Activated CD4-positive, alpha-beta T cell treated with anti-CD3 and anti-CD28 coated beads for 36 hours (primary cell): ENCODE measurements at regions of chr9 and their contacts with region 1.

Region 1: GRCh38 chr9:134449221-134449894 is 123.1 kb downstream of the RXRA start:
- DNase-seq: peak; percentile 90
- ATAC-seq: peak; percentile 100
- H3K4me3 Mint-ChIP-seq: no peak overlapping the region
- H3K27ac Mint-ChIP-seq: no peak overlapping the region
- H3K4me1 Mint-ChIP-seq: peaks cover 5% of the 10 kb centered on the region
- H3K27me3 Mint-ChIP-seq: no peaks in the 10 kb centered on the region

Region 2: GRCh38 chr9:134128727-134129679 is 320.4 kb before region 1 on chr9:
- CTCF ChIA-PET with region 1: no interaction called
- POLR2A ChIA-PET with region 1: no interaction called
- intact Hi-C with region 1: no loop called
- DNase-seq: no peak
- ATAC-seq: no peak
- H3K4me3 Mint-ChIP-seq: no peak overlapping the region
- H3K27ac Mint-ChIP-seq: no peak overlapping the region
- H3K4me1 Mint-ChIP-seq: no peaks in the 10 kb centered on the region
- H3K27me3 Mint-ChIP-seq: no peaks in the 10 kb centered on the region

Region 3: DNA sequence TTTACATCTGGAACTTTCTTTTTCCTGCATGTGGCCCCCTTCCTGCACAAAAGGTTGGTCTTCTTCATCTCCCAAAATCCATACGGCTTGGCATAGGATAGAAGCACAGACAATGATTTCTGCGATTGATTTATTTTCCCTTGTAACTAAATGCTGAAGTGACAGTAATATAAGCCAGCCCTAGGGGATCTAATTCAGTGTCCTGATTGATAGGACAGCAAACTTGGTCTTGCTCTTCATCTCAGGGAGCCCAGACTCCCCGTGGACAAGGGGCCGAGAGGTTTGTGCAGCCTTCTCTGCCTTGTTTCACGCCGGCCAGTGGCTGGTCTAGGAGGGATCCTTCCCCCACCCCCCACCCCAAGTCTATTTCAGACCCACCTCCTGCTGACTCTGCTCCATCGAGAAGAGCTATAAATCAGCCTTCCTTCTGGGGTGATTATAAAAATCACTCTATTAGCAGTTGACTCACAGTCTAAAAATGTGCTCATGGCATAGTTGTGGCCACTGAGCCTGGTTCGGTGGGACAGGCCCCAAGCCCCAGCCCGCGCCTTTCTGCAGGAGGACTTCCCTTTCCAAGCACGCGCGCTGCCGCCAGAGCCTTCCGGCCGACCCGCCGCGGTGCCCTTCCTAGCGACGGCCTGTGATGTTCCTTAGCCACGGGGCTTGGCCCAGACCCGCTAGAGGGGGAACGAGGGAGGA is 102.4 kb after region 1 on chr9:
- CTCF ChIA-PET with region 1: no interaction called
- POLR2A ChIA-PET with region 1: no interaction called
- intact Hi-C with region 1: loop called in 1 of 2 experiments (anchors 5 kb)
- DNase-seq: no peak
- ATAC-seq: no peak
- H3K4me3 Mint-ChIP-seq: no peak overlapping the region
- H3K27ac Mint-ChIP-seq: no peak overlapping the region
- H3K4me1 Mint-ChIP-seq: no peaks in the 10 kb centered on the region
- H3K27me3 Mint-ChIP-seq: peaks cover 10% of the 10 kb centered on the region

Region 4: DNA sequence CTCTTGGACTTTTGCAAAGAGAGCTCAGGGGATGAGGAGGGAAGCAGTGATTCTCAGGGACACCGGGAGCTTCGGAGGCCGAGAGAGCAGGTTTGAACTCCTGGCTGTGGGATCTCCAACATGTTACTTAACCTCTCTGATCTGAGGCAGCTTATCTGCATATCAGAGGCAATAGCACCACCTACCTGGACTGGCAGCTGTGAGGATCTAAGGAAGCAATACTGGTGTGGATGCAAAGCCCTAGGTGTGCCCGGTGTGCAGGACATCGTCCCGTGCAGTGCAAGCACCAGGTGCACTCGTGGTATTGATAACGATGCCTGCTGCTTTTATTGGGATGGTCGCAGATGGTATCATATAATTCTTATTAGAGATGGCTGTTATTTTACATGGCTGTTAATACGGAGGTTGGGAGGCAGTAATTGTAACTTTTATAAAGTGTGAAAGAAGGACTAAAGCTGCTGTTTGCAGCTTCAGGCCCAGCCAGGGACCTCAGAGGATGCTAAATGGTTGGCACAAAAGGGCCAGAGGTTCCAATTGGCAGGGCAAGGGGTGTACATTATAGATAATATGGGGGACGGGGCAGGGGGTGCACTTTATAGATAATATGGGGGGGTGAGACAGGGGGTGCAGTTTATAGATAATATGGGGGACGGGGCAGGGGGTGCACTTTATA is 207.1 kb after region 1 on chr9:
- CTCF ChIA-PET with region 1: no interaction called
- POLR2A ChIA-PET with region 1: no interaction called
- intact Hi-C with region 1: loop called in 1 of 2 experiments (anchors 1 kb)
- DNase-seq: peak; percentile 22
- ATAC-seq: no peak
- H3K4me3 Mint-ChIP-seq: no peak overlapping the region
- H3K27ac Mint-ChIP-seq: no peak overlapping the region
- H3K4me1 Mint-ChIP-seq: no peaks in the 10 kb centered on the region
- H3K27me3 Mint-ChIP-seq: no peaks in the 10 kb centered on the region

Region 5: GRCh38 chr9:134698587-134699342 is 249.4 kb after region 1 on chr9:
- CTCF ChIA-PET with region 1: interaction called, 4 read pairs
- POLR2A ChIA-PET with region 1: no interaction called
- intact Hi-C with region 1: loop called in 1 of 2 experiments (anchors 1 kb)
- DNase-seq: peak; percentile 82
- ATAC-seq: peak; percentile 68
- H3K4me3 Mint-ChIP-seq: no peak overlapping the region
- H3K27ac Mint-ChIP-seq: no peak overlapping the region
- H3K4me1 Mint-ChIP-seq: no peaks in the 10 kb centered on the region
- H3K27me3 Mint-ChIP-seq: no peaks in the 10 kb centered on the region

Region 6: DNA sequence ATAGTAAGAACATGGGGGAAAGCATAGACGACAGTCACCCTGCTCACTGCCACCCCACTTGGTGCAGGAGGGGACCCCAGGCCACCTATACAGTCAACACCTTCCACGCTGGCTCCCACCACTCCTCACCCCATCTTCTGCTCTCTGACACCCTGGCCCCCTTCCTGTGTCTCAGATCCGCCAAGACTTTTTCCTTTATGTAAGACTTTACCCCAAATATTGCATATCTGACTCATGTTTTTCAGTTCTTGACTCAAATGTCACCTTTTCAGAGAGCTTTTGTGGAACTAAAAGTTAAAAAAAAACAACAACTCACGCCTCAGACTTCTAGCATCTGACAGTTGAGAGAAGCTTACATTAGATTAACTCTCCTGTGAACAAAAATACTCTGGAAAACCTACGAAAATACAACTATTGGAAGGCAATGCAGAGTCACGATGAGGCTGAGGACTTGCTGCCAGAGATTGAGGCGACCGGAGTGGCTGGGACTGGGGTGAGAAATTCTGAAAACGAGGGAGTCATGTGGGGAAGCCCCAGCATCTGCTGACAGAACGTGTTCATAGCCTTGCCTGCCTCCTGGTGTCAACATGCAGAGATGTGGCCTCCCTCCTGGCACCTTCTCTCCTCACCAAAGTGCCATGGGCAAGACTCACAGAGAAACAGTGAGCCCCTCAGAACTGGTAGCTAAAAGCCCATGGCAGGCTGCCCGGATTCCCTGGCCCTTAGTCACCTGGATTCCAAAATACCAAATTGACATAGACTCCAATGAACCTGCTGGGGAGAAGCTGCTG is 408.9 kb after region 1 on chr9:
- CTCF ChIA-PET with region 1: no interaction called
- POLR2A ChIA-PET with region 1: no interaction called
- intact Hi-C with region 1: loop called in 1 of 2 experiments (anchors 2 kb)
- DNase-seq: peak; percentile 82
- ATAC-seq: peak; percentile 97
- H3K4me3 Mint-ChIP-seq: peak overlapping the region; percentile 19
- H3K27ac Mint-ChIP-seq: peak overlapping the region; percentile 89
- H3K4me1 Mint-ChIP-seq: peaks cover 17% of the 10 kb centered on the region
- H3K27me3 Mint-ChIP-seq: peaks cover 25% of the 10 kb centered on the region

Region 7: DNA sequence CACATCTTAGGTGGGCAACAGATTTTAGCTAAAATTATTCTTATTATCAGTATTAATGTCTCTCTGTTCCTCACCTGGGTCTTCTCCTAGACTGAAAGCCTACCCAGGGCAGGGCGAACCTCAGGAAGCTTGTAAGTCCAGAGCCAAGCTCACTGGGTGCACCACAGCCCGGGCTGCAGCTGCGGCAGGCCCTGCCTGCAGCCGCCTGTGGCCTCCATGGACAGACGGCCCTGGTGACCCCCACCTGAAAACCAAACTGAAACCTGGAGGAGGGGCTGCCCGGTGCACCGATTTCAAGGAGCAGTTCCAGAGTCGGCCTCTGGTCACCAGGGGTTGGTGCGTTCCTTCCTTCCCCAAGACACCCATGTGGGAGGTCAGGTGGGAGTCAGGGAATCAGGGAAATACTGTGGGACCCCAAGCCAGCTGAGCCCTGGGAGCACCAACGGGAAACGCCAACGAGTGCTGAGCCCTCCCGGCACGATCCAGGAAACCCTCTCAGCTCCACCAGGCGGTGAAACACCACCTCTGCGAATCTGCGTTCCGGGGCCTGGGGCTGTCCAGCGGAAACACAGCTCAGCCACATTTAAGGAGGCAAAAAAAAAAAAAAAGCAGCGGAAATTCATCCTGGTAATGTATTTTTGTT is 961.6 kb after region 1 on chr9:
- CTCF ChIA-PET with region 1: interaction called, 4 read pairs
- POLR2A ChIA-PET with region 1: no interaction called
- intact Hi-C with region 1: loop called in 1 of 2 experiments (anchors 1 kb)
- DNase-seq: no peak
- ATAC-seq: no peak
- H3K4me3 Mint-ChIP-seq: no peak overlapping the region
- H3K27ac Mint-ChIP-seq: no peak overlapping the region
- H3K4me1 Mint-ChIP-seq: no peaks in the 10 kb centered on the region
- H3K27me3 Mint-ChIP-seq: peaks cover 2% of the 10 kb centered on the region